Activated T-helper 1 cell treated with anti-CD3 and anti-CD28 coated beads, Interleukin-12 subunit alpha, Interleukin-12 subunit beta, Interleukin-2, Interleukin-4 antibody, amounts not matched to agents 30 ng/mL and 10 ng/mL and 1 ng/mL, durations not matched to agents 14 hours and 24 hours and 36 hours (primary cell): ENCODE measurements at regions of chr1 and their contacts with region 1.

Region 1: GRCh38 chr1:171566467-171566866 is 55.6 kb upstream of the MYOCOS start:
- DNase-seq: no peak
- H3K4me3 Mint-ChIP-seq: no peak overlapping the region
- H3K27ac Mint-ChIP-seq: no peak overlapping the region
- H3K4me1 Mint-ChIP-seq: peaks cover 5% of the 10 kb centered on the region
- H3K27me3 Mint-ChIP-seq: no peaks in the 10 kb centered on the region

Region 2: GRCh38 chr1:171530676-171531075 is 35.8 kb before region 1 on chr1:
- intact Hi-C with region 1: loop called (anchors 5 kb)
- DNase-seq: no peak
- H3K4me3 Mint-ChIP-seq: no peak overlapping the region
- H3K27ac Mint-ChIP-seq: no peak overlapping the region
- H3K4me1 Mint-ChIP-seq: peaks cover 6% of the 10 kb centered on the region
- H3K27me3 Mint-ChIP-seq: no peaks in the 10 kb centered on the region

Region 3: GRCh38 chr1:171583581-171584201 is 17.2 kb after region 1 on chr1:
- intact Hi-C with region 1: loop called (anchors 2 kb)
- DNase-seq: no peak
- H3K4me3 Mint-ChIP-seq: no peak overlapping the region
- H3K27ac Mint-ChIP-seq: peak overlapping the region; percentile 3
- H3K4me1 Mint-ChIP-seq: peaks cover 38% of the 10 kb centered on the region
- H3K27me3 Mint-ChIP-seq: no peaks in the 10 kb centered on the region